Colonic mucosa (tissue), 4 donors: ENCODE measurements at regions of chrX and their contacts with region 1.

Region 1: DNA sequence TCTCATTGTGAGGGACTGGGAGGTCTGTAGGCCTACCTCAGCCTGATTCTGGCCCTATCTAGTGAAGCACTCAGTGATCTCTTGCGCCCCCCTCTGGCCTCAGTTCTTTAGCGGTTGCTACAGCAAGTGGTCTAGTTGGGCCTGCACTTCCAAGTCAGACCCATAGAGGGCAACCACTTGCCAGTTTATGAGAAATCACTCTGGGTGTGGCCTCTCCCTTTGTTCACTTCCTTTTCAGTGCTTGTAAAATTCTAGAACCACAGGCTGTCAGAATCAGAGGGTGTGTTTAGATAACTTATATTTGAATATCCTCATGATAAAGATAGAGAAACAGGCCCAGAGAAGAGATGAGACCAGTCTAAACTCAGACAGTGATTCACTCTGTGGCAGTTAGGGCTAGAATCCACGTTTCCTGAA is 60.9 kb upstream of the LAS1L start:
- DNase-seq: peak; percentile 98
- H3K4me3 ChIP-seq: no peak overlapping the region
- H3K27ac ChIP-seq: peak overlapping the region; percentile 74
- H3K4me1 ChIP-seq: no peaks in the 10 kb centered on the region
- H3K27me3 ChIP-seq: no peaks in the 10 kb centered on the region
- CTCF ChIP-seq: peak; percentile 98

Region 2: GRCh38 chrX:65723706-65724105 is 128.2 kb after region 1 on chrX:
- intact Hi-C with region 1: loop called (anchors 10 kb)
- DNase-seq: no peak
- H3K4me3 ChIP-seq: no peak overlapping the region
- H3K27ac ChIP-seq: no peak overlapping the region
- H3K4me1 ChIP-seq: peaks cover 5% of the 10 kb centered on the region
- H3K27me3 ChIP-seq: no peaks in the 10 kb centered on the region
- CTCF ChIP-seq: no peak

Region 3: GRCh38 chrX:65994519-65995506 is 399.3 kb after region 1 on chrX:
- intact Hi-C with region 1: loop called (anchors 5 kb)
- DNase-seq: no peak
- H3K4me3 ChIP-seq: no peak overlapping the region
- H3K27ac ChIP-seq: no peak overlapping the region
- H3K4me1 ChIP-seq: no peaks in the 10 kb centered on the region
- H3K27me3 ChIP-seq: no peaks in the 10 kb centered on the region
- CTCF ChIP-seq: no peak

Region 4: GRCh38 chrX:67503004-67503403 is 1907.5 kb after region 1 on chrX:
- intact Hi-C with region 1: no loop called
- DNase-seq: no peak
- H3K4me3 ChIP-seq: no peak overlapping the region
- H3K27ac ChIP-seq: no peak overlapping the region
- H3K4me1 ChIP-seq: no peaks in the 10 kb centered on the region
- H3K27me3 ChIP-seq: no peaks in the 10 kb centered on the region
- CTCF ChIP-seq: no peak